ENCODE measurements at regions of chr10 and their contacts with region 1.

Region 1: GRCh38 chr10:53839440-53840039 is 961.5 kb downstream of the PCDH15 start:
- DNase-seq: peak; percentile 47
- H3K4me3 Mint-ChIP-seq: no peak overlapping the region
- H3K27ac Mint-ChIP-seq: no peak overlapping the region
- H3K4me1 Mint-ChIP-seq: peaks cover 24% of the 10 kb centered on the region
- H3K27me3 Mint-ChIP-seq: no peaks in the 10 kb centered on the region
- CTCF ChIP-seq: peak; percentile 60

Region 2: GRCh38 chr10:53209944-53210611 is 629.5 kb before region 1 on chr10:
- CTCF ChIA-PET with region 1: interaction called, 8 read pairs
- POLR2A ChIA-PET with region 1: no interaction called
- intact Hi-C with region 1: loop called (anchors 5 kb)
- DNase-seq: peak; percentile 49
- H3K4me3 Mint-ChIP-seq: no peak overlapping the region
- H3K27ac Mint-ChIP-seq: no peak overlapping the region
- H3K4me1 Mint-ChIP-seq: no peaks in the 10 kb centered on the region
- H3K27me3 Mint-ChIP-seq: no peaks in the 10 kb centered on the region
- CTCF ChIP-seq: peak; percentile 45

Region 3: DNA sequence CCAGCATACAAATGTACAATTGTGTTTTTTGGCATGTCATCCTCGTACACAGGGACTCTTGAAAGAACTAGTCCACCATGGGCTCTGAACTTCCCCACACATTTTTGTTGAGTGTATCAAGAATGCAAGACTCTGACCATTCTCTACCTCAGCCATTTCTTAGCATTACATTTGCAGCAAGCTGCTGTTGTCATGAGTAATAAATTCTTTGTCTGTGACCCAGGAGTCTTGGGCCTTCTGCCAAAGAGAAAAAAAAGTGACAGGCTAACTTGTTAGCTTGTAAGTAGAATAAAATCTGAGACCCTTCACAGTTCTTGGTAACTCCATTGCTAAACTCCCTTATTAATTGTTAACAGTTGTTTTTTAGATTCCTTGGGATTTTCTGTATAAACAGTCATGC is 524.7 kb before region 1 on chr10:
- CTCF ChIA-PET with region 1: no interaction called
- POLR2A ChIA-PET with region 1: no interaction called
- intact Hi-C with region 1: loop called (anchors 5 kb)
- DNase-seq: peak; percentile 86
- H3K4me3 Mint-ChIP-seq: no peak overlapping the region
- H3K27ac Mint-ChIP-seq: peak overlapping the region; percentile 16
- H3K4me1 Mint-ChIP-seq: peaks cover 6% of the 10 kb centered on the region
- H3K27me3 Mint-ChIP-seq: no peaks in the 10 kb centered on the region
- CTCF ChIP-seq: no peak

Region 4: DNA sequence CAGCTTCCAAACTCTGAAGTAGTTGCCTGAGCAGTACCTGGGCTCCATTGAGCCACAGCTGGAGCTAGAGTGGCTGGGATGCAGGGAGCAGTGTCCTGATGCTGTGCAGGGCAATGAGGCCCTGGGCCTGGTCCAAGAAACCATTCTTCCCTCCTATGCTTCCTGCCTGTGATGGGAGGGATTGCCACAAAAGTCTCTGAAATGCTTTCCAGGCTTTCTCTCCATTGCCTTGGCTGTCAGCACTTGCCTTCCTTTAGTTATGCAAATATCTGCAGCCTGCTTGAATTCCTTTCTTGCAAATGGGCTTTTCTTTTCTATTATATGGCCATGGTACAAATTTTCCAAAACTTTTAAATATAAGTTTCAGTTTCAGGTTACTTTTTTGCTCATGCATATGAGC is 94.8 kb before region 1 on chr10:
- CTCF ChIA-PET with region 1: no interaction called
- POLR2A ChIA-PET with region 1: no interaction called
- intact Hi-C with region 1: no loop called
- DNase-seq: no peak
- H3K4me3 Mint-ChIP-seq: no peak overlapping the region
- H3K27ac Mint-ChIP-seq: no peak overlapping the region
- H3K4me1 Mint-ChIP-seq: no peaks in the 10 kb centered on the region
- H3K27me3 Mint-ChIP-seq: no peaks in the 10 kb centered on the region
- CTCF ChIP-seq: no peak

Region 5: DNA sequence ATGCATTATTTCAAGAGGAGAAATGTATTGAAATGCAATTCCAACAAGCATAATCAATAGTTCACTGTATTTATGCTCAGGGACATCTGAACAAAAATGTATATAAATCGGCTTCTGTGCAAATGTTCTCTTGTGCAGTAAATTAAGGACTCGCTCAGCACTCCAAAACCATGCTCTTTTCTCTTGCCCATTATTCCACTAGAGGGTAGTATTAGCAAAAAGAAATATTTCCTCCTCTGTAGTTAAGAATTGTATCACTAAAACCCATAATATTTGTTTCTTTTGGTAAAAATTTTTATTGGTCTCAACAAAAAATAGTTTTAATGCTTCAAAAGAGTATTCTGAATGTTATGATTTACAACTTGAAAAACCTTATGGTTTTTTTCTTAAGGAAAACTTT is 158.4 kb after region 1 on chr10:
- CTCF ChIA-PET with region 1: interaction called, 10 read pairs
- POLR2A ChIA-PET with region 1: no interaction called
- intact Hi-C with region 1: loop called (anchors 5 kb)
- DNase-seq: peak; percentile 26
- H3K4me3 Mint-ChIP-seq: no peak overlapping the region
- H3K27ac Mint-ChIP-seq: no peak overlapping the region
- H3K4me1 Mint-ChIP-seq: no peaks in the 10 kb centered on the region
- H3K27me3 Mint-ChIP-seq: no peaks in the 10 kb centered on the region
- CTCF ChIP-seq: peak; percentile 41

Region 6: GRCh38 chr10:54133203-54133602 is 293.7 kb after region 1 on chr10:
- CTCF ChIA-PET with region 1: no interaction called
- POLR2A ChIA-PET with region 1: no interaction called
- intact Hi-C with region 1: loop called (anchors 10 kb)
- DNase-seq: no peak
- H3K4me3 Mint-ChIP-seq: no peak overlapping the region
- H3K27ac Mint-ChIP-seq: no peak overlapping the region
- H3K4me1 Mint-ChIP-seq: no peaks in the 10 kb centered on the region
- H3K27me3 Mint-ChIP-seq: no peaks in the 10 kb centered on the region
- CTCF ChIP-seq: peak; percentile 35

Region 7: GRCh38 chr10:54402576-54402975 is 563.0 kb after region 1 on chr10:
- CTCF ChIA-PET with region 1: interaction called, 6 read pairs
- POLR2A ChIA-PET with region 1: no interaction called
- intact Hi-C with region 1: loop called (anchors 1 kb)
- DNase-seq: peak; percentile 59
- H3K4me3 Mint-ChIP-seq: no peak overlapping the region
- H3K27ac Mint-ChIP-seq: no peak overlapping the region
- H3K4me1 Mint-ChIP-seq: no peaks in the 10 kb centered on the region
- H3K27me3 Mint-ChIP-seq: no peaks in the 10 kb centered on the region
- CTCF ChIP-seq: peak; percentile 62